Transverse colon (tissue), 4 donors: ENCODE measurements at regions of chr5 and their contacts with region 1.

Region 1: GRCh38 chr5:149434162-149435014 is 55.3 kb upstream of the IL17B start:
- DNase-seq: peak; percentile 67
- H3K4me3 ChIP-seq: no peak overlapping the region
- H3K27ac ChIP-seq: peak overlapping the region; percentile 53 to 97 (median 93)
- H3K4me1 ChIP-seq: peaks cover 0 to 20% (median 3%) of the 10 kb centered on the region in 4 donors
- H3K27me3 ChIP-seq: no peaks in the 10 kb centered on the region
- CTCF ChIP-seq: peak; percentile 75 to 85 (median 83)
- EP300 ChIP-seq: no peak
- POLR2A ChIP-seq: peak; percentile 8

Region 2: GRCh38 chr5:149381987-149382340 is 52.4 kb before region 1 on chr5:
- in situ Hi-C with region 1: loop called in 1 of 4 experiments (anchors 10 kb)
- intact Hi-C with region 1: loop called (anchors 5 kb)
- DNase-seq: peak; percentile 83
- H3K4me3 ChIP-seq: peak overlapping the region in 2 of 4 donors; percentile 8 to 27
- H3K27ac ChIP-seq: peak overlapping the region; percentile 87 to 91 (median 88)
- H3K4me1 ChIP-seq: peaks cover 4 to 44% (median 22%) of the 10 kb centered on the region in 4 donors
- H3K27me3 ChIP-seq: no peaks in the 10 kb centered on the region
- CTCF ChIP-seq: peak; percentile 90 to 96 (median 94)
- EP300 ChIP-seq: no peak
- POLR2A ChIP-seq: no peak

Region 3: GRCh38 chr5:149406203-149406978 is 28.0 kb before region 1 on chr5:
- in situ Hi-C with region 1: no loop called
- intact Hi-C with region 1: no loop called
- DNase-seq: peak; percentile 70
- H3K4me3 ChIP-seq: peak overlapping the region; percentile 43 to 53 (median 50)
- H3K27ac ChIP-seq: peak overlapping the region; percentile 82 to 97 (median 93)
- H3K4me1 ChIP-seq: peaks cover 0 to 22% (median 14%) of the 10 kb centered on the region in 4 donors
- H3K27me3 ChIP-seq: no peaks in the 10 kb centered on the region
- CTCF ChIP-seq: no peak
- EP300 ChIP-seq: no peak
- POLR2A ChIP-seq: peak; percentile 90

Region 4: GRCh38 chr5:149551200-149552037 is 117.0 kb after region 1 on chr5 and contains the start of gene CSNK1A1:
- in situ Hi-C with region 1: loop called in 2 of 4 experiments (anchors 5 kb)
- intact Hi-C with region 1: no loop called
- DNase-seq: peak; percentile 99
- H3K4me3 ChIP-seq: peak within 1 kb of the TSS; percentile 75 to 84 (median 80)
- H3K27ac ChIP-seq: peak within 1 kb of the TSS; percentile 98 to 99 (median 98)
- H3K4me1 ChIP-seq: peaks cover 24 to 39% (median 29%) of the 10 kb centered on the region in 4 donors
- H3K27me3 ChIP-seq: no peaks in the 10 kb centered on the region
- CTCF ChIP-seq: peak; percentile 77 to 98 (median 85)
- EP300 ChIP-seq: no peak
- POLR2A ChIP-seq: peak; percentile 97
- total RNA-seq, gene CSNK1A1: 159 to 260 (median 184) TPM

Region 5: DNA sequence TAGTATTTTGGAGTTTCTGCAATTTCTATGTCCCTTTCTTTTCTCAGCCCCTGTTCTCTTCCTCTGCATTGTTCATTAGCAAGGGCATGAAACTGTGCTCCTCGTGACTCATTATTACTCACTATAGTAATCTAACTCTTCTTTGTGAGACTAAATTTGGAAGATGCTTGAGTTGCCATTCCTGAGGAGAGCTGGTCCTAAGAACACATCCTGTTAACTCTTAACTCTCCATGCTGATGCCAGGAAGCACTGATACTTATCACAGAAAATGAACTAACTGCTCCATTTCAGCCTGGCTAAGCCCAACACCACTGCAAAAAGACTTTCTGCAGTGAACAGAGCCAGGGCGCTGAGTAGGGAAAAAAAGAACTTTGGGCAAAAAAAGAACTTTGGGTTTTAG is 127.5 kb after region 1 on chr5:
- in situ Hi-C with region 1: loop called in 2 of 4 experiments (anchors 5 to 10 kb)
- intact Hi-C with region 1: loop called (anchors 2 kb)
- DNase-seq: no peak
- H3K4me3 ChIP-seq: no peak overlapping the region
- H3K27ac ChIP-seq: peak overlapping the region; percentile 79 to 87 (median 85)
- H3K4me1 ChIP-seq: peaks cover 12 to 31% (median 20%) of the 10 kb centered on the region in 4 donors
- H3K27me3 ChIP-seq: no peaks in the 10 kb centered on the region
- CTCF ChIP-seq: no peak
- EP300 ChIP-seq: no peak
- POLR2A ChIP-seq: no peak